ENCODE measurements at regions of chr1 and their contacts with region 1.

Region 1: DNA sequence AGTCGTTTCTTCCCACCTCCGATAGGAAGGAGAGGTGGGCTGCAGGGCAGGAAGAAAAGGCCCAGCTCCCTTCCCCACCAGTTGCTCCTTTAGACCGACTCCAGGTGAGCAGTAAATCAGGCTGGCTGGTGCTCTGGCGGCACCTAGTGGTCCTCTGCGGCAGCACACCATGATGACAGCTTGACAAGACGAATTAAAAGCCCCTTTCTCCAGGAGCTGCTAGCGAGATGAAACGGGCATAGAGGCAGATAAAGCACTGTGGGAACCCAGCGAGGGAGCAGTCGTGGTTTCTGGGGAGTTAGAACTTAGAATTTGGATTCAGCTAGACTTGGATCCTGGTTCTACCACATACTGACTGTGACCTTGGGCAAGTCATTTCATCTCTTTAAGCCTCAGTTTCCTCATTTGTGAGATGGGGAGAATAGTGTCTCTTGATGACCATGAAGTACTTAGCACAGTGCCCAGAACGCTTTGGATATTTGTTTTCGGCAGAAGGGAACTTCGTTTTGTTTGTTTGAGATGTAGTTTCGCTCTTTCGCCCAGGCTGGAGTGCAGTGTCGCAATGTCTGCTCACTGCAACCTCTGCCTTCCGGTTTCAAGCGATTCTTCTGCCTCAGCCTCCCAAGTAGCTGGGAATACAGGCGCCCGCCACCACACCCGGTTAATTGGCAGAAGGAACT is 21.8 kb upstream of the COL9A2 start:
- DNase-seq: peak; percentile 88
- H3K4me3 ChIP-seq: no peak overlapping the region
- H3K27ac ChIP-seq: no peak overlapping the region
- H3K4me1 ChIP-seq: no peaks in the 10 kb centered on the region
- H3K27me3 ChIP-seq: no peaks in the 10 kb centered on the region
- CTCF ChIP-seq: peak; percentile 99

Region 2: GRCh38 chr1:40059338-40059959 is 279.4 kb before region 1 on chr1:
- CTCF ChIA-PET with region 1: interaction called, 10 read pairs
- POLR2A ChIA-PET with region 1: no interaction called
- intact Hi-C with region 1: no loop called
- DNase-seq: peak; percentile 81
- H3K4me3 ChIP-seq: peak overlapping the region; percentile 16
- H3K27ac ChIP-seq: peak overlapping the region; percentile 82
- H3K4me1 ChIP-seq: peaks cover 30% of the 10 kb centered on the region
- H3K27me3 ChIP-seq: no peaks in the 10 kb centered on the region
- CTCF ChIP-seq: peak; percentile 46; the same call in 1 of the 2 replicates

Region 3: GRCh38 chr1:40078512-40079333 is 260.2 kb before region 1 on chr1:
- CTCF ChIA-PET with region 1: interaction called, 6 read pairs
- POLR2A ChIA-PET with region 1: no interaction called
- intact Hi-C with region 1: loop called (anchors 5 kb)
- DNase-seq: peak; percentile 76
- H3K4me3 ChIP-seq: no peak overlapping the region
- H3K27ac ChIP-seq: no peak overlapping the region
- H3K4me1 ChIP-seq: no peaks in the 10 kb centered on the region
- H3K27me3 ChIP-seq: no peaks in the 10 kb centered on the region
- CTCF ChIP-seq: peak; percentile 82

Region 4: GRCh38 chr1:40143891-40144575 is 194.9 kb before region 1 on chr1:
- CTCF ChIA-PET with region 1: interaction called, 25 read pairs
- POLR2A ChIA-PET with region 1: no interaction called
- intact Hi-C with region 1: loop called (anchors 2 kb)
- DNase-seq: peak; percentile 84
- H3K4me3 ChIP-seq: no peak overlapping the region
- H3K27ac ChIP-seq: no peak overlapping the region
- H3K4me1 ChIP-seq: no peaks in the 10 kb centered on the region
- H3K27me3 ChIP-seq: peaks cover 31% of the 10 kb centered on the region
- CTCF ChIP-seq: peak; percentile 85

Region 5: DNA sequence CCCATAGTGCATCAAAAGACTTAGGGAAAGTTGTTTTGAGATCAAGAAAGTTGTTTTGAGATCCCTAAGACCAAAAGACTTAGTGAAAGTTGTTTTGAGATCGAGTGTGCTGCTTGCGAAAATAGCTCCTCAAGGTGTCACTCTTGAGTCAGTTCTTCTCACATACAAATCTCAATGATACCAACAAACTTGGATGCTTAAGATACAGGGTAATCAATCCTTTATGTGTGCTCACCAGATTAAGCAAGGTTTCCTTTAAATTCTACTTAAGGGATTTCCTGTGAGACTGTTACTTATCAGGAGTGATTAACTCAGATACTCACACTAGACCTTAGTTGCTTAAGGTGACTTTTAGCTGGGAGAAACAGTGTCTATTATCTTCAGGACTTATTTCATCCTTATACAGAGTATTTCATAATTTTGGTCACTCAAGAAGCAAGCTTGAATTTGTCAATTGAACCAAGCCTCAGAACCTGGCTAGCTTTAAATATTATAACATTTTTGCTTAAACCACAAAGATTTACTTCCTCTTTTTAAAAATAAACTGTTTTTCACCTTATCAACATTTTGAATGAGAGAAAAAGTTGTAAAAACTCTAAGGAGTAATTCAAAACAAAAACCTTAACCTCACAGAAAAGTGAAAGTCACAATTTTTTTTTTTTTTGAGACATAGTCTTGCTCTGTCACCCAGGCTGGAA is 185.7 kb before region 1 on chr1:
- CTCF ChIA-PET with region 1: interaction called, 16 read pairs
- POLR2A ChIA-PET with region 1: no interaction called
- intact Hi-C with region 1: no loop called
- DNase-seq: peak; percentile 71
- H3K4me3 ChIP-seq: peak overlapping the region; percentile 18
- H3K27ac ChIP-seq: no peak overlapping the region
- H3K4me1 ChIP-seq: peaks cover 5% of the 10 kb centered on the region
- H3K27me3 ChIP-seq: peaks cover 2% of the 10 kb centered on the region
- CTCF ChIP-seq: peak; percentile 81

Region 6: GRCh38 chr1:40404670-40405462 is 66.0 kb after region 1 on chr1:
- CTCF ChIA-PET with region 1: interaction called, 17 read pairs
- POLR2A ChIA-PET with region 1: no interaction called
- intact Hi-C with region 1: loop called (anchors 2 kb)
- DNase-seq: peak; percentile 70
- H3K4me3 ChIP-seq: no peak overlapping the region
- H3K27ac ChIP-seq: no peak overlapping the region
- H3K4me1 ChIP-seq: peaks cover 18% of the 10 kb centered on the region
- H3K27me3 ChIP-seq: no peaks in the 10 kb centered on the region
- CTCF ChIP-seq: peak; percentile 86

Region 7: DNA sequence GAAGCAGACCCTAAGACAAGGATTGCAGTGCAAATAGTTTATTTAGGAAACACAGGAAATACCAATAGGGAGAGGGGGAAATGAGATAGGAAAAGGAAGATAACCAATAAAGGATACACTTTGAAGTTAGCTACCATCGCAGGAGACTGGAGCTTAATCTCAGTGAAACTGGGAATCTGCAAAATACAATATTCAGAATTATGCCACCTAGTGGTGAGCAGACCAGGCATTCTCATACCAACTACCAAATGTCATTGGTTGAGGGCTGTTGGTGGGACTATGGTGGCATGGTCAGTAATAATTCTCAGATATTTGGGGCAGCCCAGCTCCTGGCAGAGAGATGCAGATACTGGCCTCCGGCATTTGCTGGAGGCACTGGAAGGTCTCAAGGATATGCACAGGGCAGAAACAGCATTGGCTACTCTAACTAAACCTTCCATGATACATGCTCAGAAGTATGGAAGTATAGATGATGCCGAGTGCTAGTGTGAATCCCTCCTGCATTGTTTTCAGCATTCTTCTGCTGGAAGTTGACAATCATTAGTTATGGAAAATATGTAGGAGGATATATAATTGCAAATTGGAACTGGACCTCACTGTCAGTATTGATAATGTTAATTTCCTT is 99.6 kb after region 1 on chr1:
- CTCF ChIA-PET with region 1: interaction called, 11 read pairs
- POLR2A ChIA-PET with region 1: no interaction called
- intact Hi-C with region 1: no loop called
- DNase-seq: peak; percentile 56
- H3K4me3 ChIP-seq: no peak overlapping the region
- H3K27ac ChIP-seq: no peak overlapping the region
- H3K4me1 ChIP-seq: no peaks in the 10 kb centered on the region
- H3K27me3 ChIP-seq: no peaks in the 10 kb centered on the region
- CTCF ChIP-seq: peak; percentile 87